Panc1 (cell line): ENCODE measurements at regions of chr15 and their contacts with region 1.

Region 1: GRCh38 chr15:73994419-73994883 is at the start of gene PML:
- DNase-seq: peak; percentile 72
- ATAC-seq: peak; percentile 92
- H3K4me3 ChIP-seq: peak within 1 kb of the TSS; percentile 82 to 89
- H3K27ac ChIP-seq: peak within 1 kb of the TSS; percentile 87
- H3K4me1 ChIP-seq: peaks cover 38% of the 10 kb centered on the region
- H3K27me3 ChIP-seq: no peaks in the 10 kb centered on the region
- CTCF ChIP-seq: no peak
- total RNA-seq, gene PML: 52.2 TPM

Region 2: DNA sequence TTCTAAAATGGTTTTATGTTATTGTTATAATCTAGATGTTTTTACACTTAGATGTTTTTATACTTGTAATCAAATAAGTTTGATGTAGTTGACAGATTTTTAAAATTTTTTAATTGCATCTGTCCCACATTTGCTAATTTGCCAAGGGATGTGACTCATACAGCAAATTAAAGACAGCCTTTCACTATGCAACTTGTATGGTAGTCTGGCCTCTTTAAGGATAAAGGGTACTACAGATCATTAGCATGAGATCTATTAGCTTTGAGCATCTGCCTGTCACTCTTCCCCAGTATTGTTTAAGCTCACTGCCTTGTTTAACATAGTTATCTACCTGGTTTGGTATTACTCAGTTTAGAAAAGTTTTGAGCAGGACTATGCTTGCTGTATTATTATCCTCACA is 444.3 kb before region 1 on chr15:
- CTCF ChIA-PET with region 1: no interaction called
- POLR2A ChIA-PET with region 1: no interaction called
- in situ Hi-C with region 1: no loop called
- intact Hi-C with region 1: no loop called
- DNase-seq: no peak
- ATAC-seq: no peak
- H3K4me3 ChIP-seq: no peak overlapping the region
- H3K27ac ChIP-seq: no peak overlapping the region
- H3K4me1 ChIP-seq: no peaks in the 10 kb centered on the region
- H3K27me3 ChIP-seq: no peaks in the 10 kb centered on the region
- CTCF ChIP-seq: no peak

Region 3: GRCh38 chr15:74460871-74461846 is 466.7 kb after region 1 on chr15 and contains the start of gene UBL7:
- CTCF ChIA-PET with region 1: no interaction called
- POLR2A ChIA-PET with region 1: no interaction called
- in situ Hi-C with region 1: no loop called
- intact Hi-C with region 1: no loop called
- DNase-seq: peak; percentile 78
- ATAC-seq: peak; percentile 98
- H3K4me3 ChIP-seq: peak within 1 kb of the TSS; percentile 74 to 78
- H3K27ac ChIP-seq: peak within 1 kb of the TSS; percentile 91
- H3K4me1 ChIP-seq: 0 out of 2 replicates have a peak, but pooled peaks cover 3% of the 10 kb centered on the region
- H3K27me3 ChIP-seq: no peaks in the 10 kb centered on the region
- CTCF ChIP-seq: no peak; the same call in 1 of the 2 replicates
- total RNA-seq, gene UBL7: 68.5 TPM

Region 4: GRCh38 chr15:74511583-74511982 is 517.1 kb after region 1 on chr15:
- CTCF ChIA-PET with region 1: interaction called, 11 read pairs
- POLR2A ChIA-PET with region 1: no interaction called
- in situ Hi-C with region 1: no loop called
- intact Hi-C with region 1: no loop called
- DNase-seq: no peak
- ATAC-seq: no peak
- H3K4me3 ChIP-seq: no peak overlapping the region
- H3K27ac ChIP-seq: no peak overlapping the region
- H3K4me1 ChIP-seq: no peaks in the 10 kb centered on the region
- H3K27me3 ChIP-seq: no peaks in the 10 kb centered on the region
- CTCF ChIP-seq: no peak